Naive thymus-derived CD4-positive, alpha-beta T cell (primary cell): ENCODE measurements at regions of chr1 and their contacts with region 1.

Region 1: GRCh38 chr1:113904674-113905434 is at the starts of genes AP4B1 and DCLRE1B:
- DNase-seq: peak; percentile 88 to 98 (median 97)
- ATAC-seq: peak; percentile 96
- H3K4me3 ChIP-seq: peak within 1 kb of the TSS; percentile 82
- H3K4me3 Mint-ChIP-seq: peak within 1 kb of the TSS; percentile 92 to 100 (median 99)
- H3K27ac ChIP-seq: peak within 1 kb of the TSS; percentile 89
- H3K27ac Mint-ChIP-seq: peak within 1 kb of the TSS; percentile 96 to 100 (median 99)
- H3K4me1 ChIP-seq: peaks cover 15 to 21% of the 10 kb centered on the region in 2 donors
- H3K4me1 Mint-ChIP-seq: peaks cover 36 to 62% (median 54%) of the 10 kb centered on the region in 7 donors
- H3K27me3 ChIP-seq: no peaks in the 10 kb centered on the region
- H3K27me3 Mint-ChIP-seq: peaks cover 0 to 4% (median 0%) of the 10 kb centered on the region in 5 donors
- total RNA-seq, gene AP4B1: 50.8 to 75.4 (median 65.0) TPM
- total RNA-seq, gene DCLRE1B: 4.1 to 13.6 (median 6.9) TPM

Region 2: DNA sequence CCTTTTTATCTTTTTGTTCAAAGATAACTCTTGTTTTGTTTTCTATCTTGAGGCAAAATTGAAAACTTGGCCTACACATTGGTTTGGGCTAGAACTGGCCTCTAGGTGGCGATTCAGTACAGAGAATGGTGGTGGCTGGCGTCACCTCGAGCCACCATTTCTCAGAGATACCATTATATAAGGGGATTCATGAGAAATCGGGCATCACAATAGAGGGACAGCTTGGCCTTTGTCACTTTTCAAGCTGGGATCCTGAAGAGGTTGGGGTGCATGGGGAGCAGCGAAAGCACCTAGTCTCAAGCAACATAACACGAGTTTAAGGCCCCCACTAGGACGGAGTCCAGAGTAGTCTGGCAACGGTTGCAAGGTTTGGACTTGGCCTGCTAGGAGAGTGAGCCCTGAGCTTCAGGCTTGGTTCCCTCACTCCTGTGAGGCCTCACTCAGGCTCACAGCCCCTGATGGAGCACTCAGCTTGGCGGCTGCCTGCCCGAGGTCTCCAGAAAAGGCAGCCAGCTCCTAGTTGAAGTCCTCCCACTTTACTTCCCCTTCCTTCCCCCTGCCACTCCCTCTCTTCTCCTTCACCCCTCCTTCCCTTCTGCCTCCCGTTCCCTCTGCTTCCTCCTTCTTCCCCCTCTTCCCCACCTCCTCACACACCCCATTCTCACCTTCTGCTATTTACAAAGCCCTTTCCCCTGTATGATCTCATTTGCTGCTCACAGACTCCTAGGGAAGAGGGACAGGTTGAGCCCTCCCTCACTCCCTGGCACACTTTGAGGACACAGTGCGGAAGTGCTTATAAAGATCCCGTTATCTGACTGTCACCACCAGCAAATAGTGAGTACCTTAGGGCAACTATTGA is 764.0 kb before region 1 on chr1:
- CTCF ChIA-PET with region 1: no interaction called
- POLR2A ChIA-PET with region 1: no interaction called
- intact Hi-C with region 1: loop called in 1 of 2 experiments (anchors 10 kb)
- DNase-seq: peak in 8 of 9 donors; percentile 8 to 62 (median 47)
- ATAC-seq: peak; percentile 87
- H3K4me3 ChIP-seq: no peak overlapping the region
- H3K4me3 Mint-ChIP-seq: peak overlapping the region in 2 of 10 donors; percentile 21 to 59
- H3K27ac ChIP-seq: no peak overlapping the region
- H3K27ac Mint-ChIP-seq: peak overlapping the region in 4 of 9 donors; percentile 21 to 49 (median 46)
- H3K4me1 ChIP-seq: peaks cover 0 to 8% of the 10 kb centered on the region in 2 donors
- H3K4me1 Mint-ChIP-seq: peaks cover 8 to 25% (median 19%) of the 10 kb centered on the region in 7 donors
- H3K27me3 ChIP-seq: no peaks in the 10 kb centered on the region
- H3K27me3 Mint-ChIP-seq: no peaks in the 10 kb centered on the region

Region 3: GRCh38 chr1:113759333-113760101 is 145.3 kb before region 1 on chr1 and contains the start of gene PHTF1:
- CTCF ChIA-PET with region 1: no interaction called
- POLR2A ChIA-PET with region 1: interaction called, 3 read pairs
- intact Hi-C with region 1: loop called in 1 of 2 experiments (anchors 2 kb)
- DNase-seq: peak in 8 of 9 donors; percentile 14 to 74 (median 23)
- ATAC-seq: peak; percentile 88
- H3K4me3 ChIP-seq: peak within 1 kb of the TSS; percentile 81
- H3K4me3 Mint-ChIP-seq: peak within 1 kb of the TSS; percentile 91 to 97 (median 93)
- H3K27ac ChIP-seq: peak within 1 kb of the TSS; percentile 74
- H3K27ac Mint-ChIP-seq: peak within 1 kb of the TSS; percentile 87 to 96 (median 90)
- H3K4me1 ChIP-seq: peaks cover 0 to 16% of the 10 kb centered on the region in 2 donors
- H3K4me1 Mint-ChIP-seq: peaks cover 0 to 36% (median 24%) of the 10 kb centered on the region in 7 donors
- H3K27me3 ChIP-seq: no peaks in the 10 kb centered on the region
- H3K27me3 Mint-ChIP-seq: no peaks in the 10 kb centered on the region
- total RNA-seq, gene PHTF1: 2.5 to 21.0 (median 7.1) TPM

Region 4: GRCh38 chr1:113849060-113849459 is 55.8 kb before region 1 on chr1:
- CTCF ChIA-PET with region 1: interaction called, 3 read pairs
- POLR2A ChIA-PET with region 1: interaction called, 4 read pairs
- intact Hi-C with region 1: loop called in 1 of 2 experiments (anchors 5 kb)
- DNase-seq: no peak
- ATAC-seq: no peak
- H3K4me3 ChIP-seq: no peak overlapping the region
- H3K4me3 Mint-ChIP-seq: no peak overlapping the region
- H3K27ac ChIP-seq: no peak overlapping the region
- H3K27ac Mint-ChIP-seq: no peak overlapping the region
- H3K4me1 ChIP-seq: peaks cover 8 to 10% of the 10 kb centered on the region in 2 donors
- H3K4me1 Mint-ChIP-seq: peaks cover 8 to 16% (median 14%) of the 10 kb centered on the region in 7 donors
- H3K27me3 ChIP-seq: no peaks in the 10 kb centered on the region
- H3K27me3 Mint-ChIP-seq: no peaks in the 10 kb centered on the region

Region 5: DNA sequence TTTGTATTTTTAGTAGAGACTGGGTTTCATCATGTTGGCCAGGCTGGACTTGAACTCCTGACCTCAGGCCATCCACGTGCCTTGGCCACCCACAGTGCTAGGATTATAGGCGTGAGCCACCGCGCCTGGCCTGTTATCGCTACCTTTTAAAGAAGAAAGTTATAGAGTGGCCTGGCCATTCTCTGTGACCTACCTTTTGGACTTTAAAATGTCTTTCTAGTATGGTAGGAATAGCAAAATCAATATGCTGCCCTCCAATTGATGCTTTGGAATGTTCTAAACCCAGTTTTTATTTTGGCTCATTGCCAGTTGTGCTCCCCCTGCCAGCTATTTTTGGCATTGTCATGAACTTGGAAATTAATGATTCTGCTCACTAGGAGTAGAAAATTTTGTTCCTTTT is 44.2 kb after region 1 on chr1:
- CTCF ChIA-PET with region 1: interaction called, 5 read pairs
- POLR2A ChIA-PET with region 1: interaction called, 16 read pairs
- intact Hi-C with region 1: no loop called
- DNase-seq: peak in 5 of 9 donors; percentile 16 to 53 (median 41)
- ATAC-seq: no peak
- H3K4me3 ChIP-seq: no peak overlapping the region
- H3K4me3 Mint-ChIP-seq: peak overlapping the region in 9 of 10 donors; percentile 36 to 88 (median 72)
- H3K27ac ChIP-seq: peak overlapping the region; percentile 73
- H3K27ac Mint-ChIP-seq: peak overlapping the region in 8 of 9 donors; percentile 92 to 99 (median 97)
- H3K4me1 ChIP-seq: peaks cover 42 to 68% of the 10 kb centered on the region in 2 donors
- H3K4me1 Mint-ChIP-seq: peaks cover 33 to 95% (median 85%) of the 10 kb centered on the region in 7 donors
- H3K27me3 ChIP-seq: no peaks in the 10 kb centered on the region
- H3K27me3 Mint-ChIP-seq: no peaks in the 10 kb centered on the region

Region 6: DNA sequence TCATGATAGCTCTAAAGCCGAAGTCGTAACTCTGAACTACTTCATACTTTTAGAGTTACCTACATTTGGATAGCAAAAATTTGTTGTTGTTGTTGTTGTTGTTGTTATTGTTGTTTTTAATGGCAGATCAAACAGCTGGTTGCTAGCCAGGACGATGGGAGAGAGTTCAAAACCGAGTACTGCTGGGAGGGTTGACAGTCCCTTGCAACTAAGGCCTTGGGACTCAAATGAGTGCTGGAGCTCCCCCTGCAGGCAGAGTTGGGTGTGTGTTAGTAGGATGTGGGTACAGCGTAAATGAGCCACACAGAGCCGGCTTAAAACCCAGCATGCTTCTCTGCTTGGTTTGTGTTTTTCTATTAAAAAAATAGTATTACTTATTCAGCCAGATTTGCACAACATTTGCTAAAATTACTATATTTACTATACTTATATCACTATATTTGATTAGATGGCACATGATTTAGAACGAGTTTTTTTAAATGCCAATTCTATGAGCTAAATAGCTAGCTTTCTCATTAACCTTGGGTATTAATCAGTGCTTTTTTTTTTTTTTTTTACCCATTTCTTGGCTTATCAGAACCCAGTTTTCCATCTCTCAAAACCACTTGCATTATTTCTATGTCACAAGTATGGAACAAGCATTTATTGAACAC is 378.0 kb after region 1 on chr1:
- CTCF ChIA-PET with region 1: interaction called, 3 read pairs
- POLR2A ChIA-PET with region 1: no interaction called
- intact Hi-C with region 1: loop called in 1 of 2 experiments (anchors 5 kb)
- DNase-seq: peak; percentile 65 to 84 (median 78)
- ATAC-seq: peak; percentile 99
- H3K4me3 ChIP-seq: no peak overlapping the region
- H3K4me3 Mint-ChIP-seq: no peak overlapping the region
- H3K27ac ChIP-seq: no peak overlapping the region
- H3K27ac Mint-ChIP-seq: no peak overlapping the region
- H3K4me1 ChIP-seq: no peaks in the 10 kb centered on the region
- H3K4me1 Mint-ChIP-seq: peaks cover 0 to 9% (median 0%) of the 10 kb centered on the region in 7 donors
- H3K27me3 ChIP-seq: no peaks in the 10 kb centered on the region
- H3K27me3 Mint-ChIP-seq: peaks cover 0 to 25% (median 0%) of the 10 kb centered on the region in 5 donors